Colonic mucosa (tissue), 4 donors: ENCODE measurements at regions of chr1 and their contacts with region 1.

Region 1: DNA sequence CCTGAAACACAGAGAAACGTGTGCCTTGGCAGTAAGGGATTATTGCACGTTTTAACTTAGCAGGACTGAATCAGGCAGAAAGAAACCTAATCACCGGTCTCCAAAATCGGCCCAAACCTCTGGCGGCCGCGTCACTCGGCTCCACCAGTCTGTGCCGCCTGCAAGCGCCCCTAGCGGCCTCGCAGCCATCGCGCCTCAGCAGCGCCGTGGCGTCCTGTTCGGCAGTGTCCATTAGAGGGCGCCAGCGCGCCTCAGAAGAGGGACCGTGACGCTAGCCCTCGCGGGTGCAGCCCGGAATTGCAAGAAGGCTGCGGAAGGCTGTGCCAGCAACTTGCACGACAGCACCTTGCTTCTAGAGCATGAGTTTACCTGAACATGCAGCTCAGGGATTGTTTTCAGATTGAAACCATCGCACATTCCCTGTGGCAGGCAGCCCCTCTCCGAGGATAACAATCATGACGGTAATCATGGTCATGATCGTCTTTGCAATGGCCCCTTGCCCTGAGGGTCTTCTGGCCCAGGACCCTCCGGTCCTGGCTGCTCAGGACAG is 164.4 kb downstream of the TRIM33 start:
- DNase-seq: peak; percentile 96
- H3K4me3 ChIP-seq: peak overlapping the region; percentile 35
- H3K27ac ChIP-seq: peak overlapping the region; percentile 13
- H3K4me1 ChIP-seq: no peaks in the 10 kb centered on the region
- H3K27me3 ChIP-seq: no peaks in the 10 kb centered on the region
- CTCF ChIP-seq: peak; percentile 100

Region 2: DNA sequence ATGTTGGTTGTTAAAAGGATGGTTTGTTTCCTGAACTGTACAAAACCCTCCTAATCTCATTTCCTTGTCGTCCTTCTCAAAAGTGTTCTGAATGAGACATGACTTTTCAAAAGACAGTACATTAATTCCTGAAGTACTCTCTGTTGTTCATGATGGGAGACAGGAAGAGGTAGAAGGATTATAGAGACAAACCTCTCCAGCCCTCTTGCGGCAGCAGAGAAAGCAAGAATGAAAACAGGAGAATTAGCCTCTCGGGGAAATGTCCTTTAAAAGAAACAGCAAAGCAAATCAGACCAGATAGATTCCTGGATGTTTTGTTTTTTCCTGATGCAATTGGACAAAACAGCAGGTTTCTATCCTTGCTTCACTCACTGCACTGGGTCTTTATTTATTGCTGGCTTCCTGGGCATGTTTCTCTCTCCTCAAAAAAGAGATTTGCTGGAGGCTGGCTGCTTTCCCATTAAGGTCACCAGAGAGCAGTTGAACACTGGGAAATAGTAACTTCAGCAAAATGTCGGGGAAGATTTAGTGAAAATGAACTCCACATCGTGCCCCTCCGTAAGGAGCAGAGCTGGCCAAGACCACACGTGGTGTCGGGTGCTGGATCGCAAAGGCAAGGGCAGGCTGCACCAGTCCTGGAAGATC is 47.1 kb before region 1 on chr1:
- intact Hi-C with region 1: no loop called
- DNase-seq: no peak
- H3K4me3 ChIP-seq: no peak overlapping the region
- H3K27ac ChIP-seq: no peak overlapping the region
- H3K4me1 ChIP-seq: no peaks in the 10 kb centered on the region
- H3K27me3 ChIP-seq: no peaks in the 10 kb centered on the region
- CTCF ChIP-seq: no peak

Region 3: DNA sequence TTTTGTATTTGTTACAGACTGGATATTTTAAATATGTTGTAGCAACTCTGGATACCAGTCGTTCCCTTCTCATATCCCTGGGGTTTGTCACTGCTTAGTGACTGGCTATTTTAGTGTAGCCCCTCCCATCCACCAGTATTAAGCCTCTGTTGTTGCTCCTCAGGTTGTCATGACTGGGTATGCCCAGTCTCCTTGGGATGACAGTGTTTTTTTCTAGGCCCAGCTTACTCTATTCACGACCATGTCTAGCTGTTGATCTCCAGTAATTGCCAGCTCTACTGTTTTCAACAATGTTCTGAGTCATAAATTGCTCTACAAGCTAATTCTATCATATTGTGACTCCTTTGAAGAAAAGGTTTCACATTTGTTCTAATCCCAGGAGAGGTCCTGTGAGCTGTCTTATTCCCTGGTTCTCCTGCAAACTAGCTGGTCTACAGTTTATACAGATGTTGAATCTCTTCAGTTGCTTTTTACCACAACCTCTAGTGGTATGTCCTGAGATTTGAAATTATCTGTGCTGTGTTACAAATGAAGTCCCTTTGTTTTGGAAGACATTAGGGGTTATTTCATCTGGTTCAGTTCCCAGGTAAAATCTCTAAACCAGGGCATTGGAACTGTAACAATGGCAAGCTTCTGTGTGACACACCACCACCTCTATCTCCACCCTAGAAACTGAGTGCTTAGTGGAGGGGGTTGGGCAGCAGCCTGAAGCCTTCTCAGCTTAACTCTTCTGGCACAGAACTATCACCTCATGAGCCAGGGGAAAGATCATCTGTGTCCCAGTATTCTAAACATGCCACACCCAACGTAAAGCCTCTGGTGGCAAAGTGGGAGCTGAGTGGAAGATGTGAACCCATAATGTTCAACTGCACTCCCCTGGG is 39.8 kb after region 1 on chr1:
- intact Hi-C with region 1: no loop called
- DNase-seq: no peak
- H3K4me3 ChIP-seq: no peak overlapping the region
- H3K27ac ChIP-seq: no peak overlapping the region
- H3K4me1 ChIP-seq: no peaks in the 10 kb centered on the region
- H3K27me3 ChIP-seq: no peaks in the 10 kb centered on the region
- CTCF ChIP-seq: no peak

Region 4: DNA sequence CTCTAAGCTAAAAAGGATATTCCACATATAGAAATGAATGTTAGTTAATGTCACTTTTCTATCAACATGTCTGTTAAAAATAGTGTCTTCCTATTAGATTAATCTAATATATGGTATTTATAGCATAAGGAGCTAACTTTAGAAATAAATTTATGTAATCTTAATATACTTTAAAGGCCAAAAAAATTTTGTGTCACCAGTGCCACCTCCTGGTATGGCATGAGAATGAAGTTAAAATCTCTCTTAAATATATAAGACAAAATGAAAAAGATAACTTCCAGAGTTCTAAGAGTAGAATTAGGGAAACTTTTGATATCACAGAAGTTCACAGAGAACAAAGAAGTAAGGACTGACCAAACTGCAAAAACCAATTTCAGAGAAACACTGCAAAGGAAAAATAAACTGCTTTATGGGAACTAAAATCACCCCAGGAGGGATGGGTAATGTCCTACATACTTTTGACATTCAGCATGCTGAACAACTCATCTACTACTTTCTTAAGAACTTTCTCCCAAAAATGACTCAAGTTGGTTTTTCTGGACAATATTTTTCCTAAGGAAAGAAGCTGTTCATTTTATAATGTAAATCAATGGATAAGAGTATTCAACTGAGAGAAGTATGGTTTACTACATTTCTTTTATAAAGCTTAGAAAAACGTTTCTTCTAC is 81.7 kb after region 1 on chr1:
- intact Hi-C with region 1: loop called (anchors 5 kb)
- DNase-seq: no peak
- H3K4me3 ChIP-seq: no peak overlapping the region
- H3K27ac ChIP-seq: no peak overlapping the region
- H3K4me1 ChIP-seq: no peaks in the 10 kb centered on the region
- H3K27me3 ChIP-seq: no peaks in the 10 kb centered on the region
- CTCF ChIP-seq: peak; percentile 27

Region 5: GRCh38 chr1:114575532-114575931 is 229.0 kb after region 1 on chr1:
- intact Hi-C with region 1: loop called (anchors 10 kb)
- DNase-seq: no peak
- H3K4me3 ChIP-seq: no peak overlapping the region
- H3K27ac ChIP-seq: no peak overlapping the region
- H3K4me1 ChIP-seq: no peaks in the 10 kb centered on the region
- H3K27me3 ChIP-seq: no peaks in the 10 kb centered on the region
- CTCF ChIP-seq: no peak

Region 6: DNA sequence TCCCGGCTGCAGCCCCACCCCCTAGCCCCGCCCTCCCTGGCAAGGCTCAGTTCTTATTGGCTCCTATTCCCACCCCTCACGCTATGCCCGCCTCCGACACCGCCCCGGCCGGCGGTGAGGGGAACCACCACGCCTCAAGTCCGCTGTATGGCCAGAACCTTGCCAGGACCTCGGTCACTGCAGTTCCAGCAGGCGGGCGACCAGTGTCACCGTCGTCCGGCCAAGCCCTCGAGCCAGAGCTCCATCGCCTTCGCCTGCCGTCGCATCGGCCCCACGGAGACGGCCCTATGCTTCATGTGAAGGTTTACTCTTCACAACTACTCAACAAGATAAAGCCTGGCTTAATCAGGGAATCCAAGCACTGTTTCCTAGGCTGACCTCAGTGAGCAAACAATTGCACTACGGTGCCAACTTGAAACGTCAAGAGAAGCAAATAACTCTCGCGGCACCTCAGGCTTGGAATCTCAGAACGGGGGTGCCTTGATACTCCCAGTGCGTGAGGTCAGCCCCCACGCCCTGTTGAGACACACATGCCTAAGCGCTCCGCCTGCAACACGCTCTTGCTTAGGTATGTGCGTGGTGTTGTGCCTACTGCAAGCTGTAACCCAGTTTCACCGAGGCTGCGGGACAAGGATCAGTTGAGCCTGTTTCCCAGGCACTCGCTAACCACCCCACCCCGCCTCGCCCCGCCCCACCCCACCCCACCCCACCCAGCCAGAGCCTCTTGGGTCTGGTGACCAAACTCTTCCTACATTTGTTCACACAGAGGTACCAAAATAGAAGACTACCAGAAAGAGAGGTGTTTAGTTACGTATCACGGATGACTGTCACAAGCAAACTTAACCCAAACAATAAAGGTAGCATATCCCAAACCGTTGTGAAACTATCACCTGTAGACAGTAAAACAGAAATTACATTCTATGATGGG is 323.8 kb after region 1 on chr1:
- intact Hi-C with region 1: loop called (anchors 5 kb)
- DNase-seq: peak; percentile 98
- H3K4me3 ChIP-seq: peak overlapping the region; percentile 86
- H3K27ac ChIP-seq: peak overlapping the region; percentile 35
- H3K4me1 ChIP-seq: no peaks in the 10 kb centered on the region
- H3K27me3 ChIP-seq: no peaks in the 10 kb centered on the region
- CTCF ChIP-seq: no peak

Region 7: DNA sequence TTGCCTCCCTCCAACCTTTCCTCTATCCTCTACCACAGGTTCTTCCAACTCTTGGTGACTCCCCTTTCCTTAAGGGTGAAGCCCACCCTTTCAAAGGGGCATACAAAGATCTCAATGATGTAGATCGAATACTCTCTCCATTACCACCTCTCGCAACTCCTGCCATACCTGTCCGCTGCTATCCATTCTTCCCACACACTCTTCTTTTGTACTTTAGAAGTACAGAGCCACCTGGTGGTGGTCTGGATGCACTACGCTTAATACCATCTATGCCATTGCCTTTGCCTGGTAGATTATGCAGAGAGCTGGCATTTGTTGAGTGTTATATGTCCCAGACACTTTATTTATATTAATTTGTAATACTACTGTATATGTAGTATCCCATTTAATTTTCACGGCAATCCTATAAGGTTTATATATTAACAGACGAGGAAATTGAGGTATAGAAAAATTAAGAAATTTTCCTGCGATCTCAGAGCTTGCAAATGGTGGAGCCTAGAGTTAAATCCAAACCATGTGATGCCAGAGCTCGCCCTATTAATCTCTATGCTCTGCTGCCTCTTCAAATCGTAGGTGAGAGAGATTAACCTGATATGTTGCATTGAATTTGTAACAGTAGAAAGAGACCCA is 706.0 kb after region 1 on chr1:
- intact Hi-C with region 1: loop called (anchors 5 kb)
- DNase-seq: peak; percentile 63
- H3K4me3 ChIP-seq: no peak overlapping the region
- H3K27ac ChIP-seq: no peak overlapping the region
- H3K4me1 ChIP-seq: no peaks in the 10 kb centered on the region
- H3K27me3 ChIP-seq: no peaks in the 10 kb centered on the region
- CTCF ChIP-seq: peak; percentile 73